ENCODE measurements at regions of chr12 and their contacts with region 1.

Region 1: DNA sequence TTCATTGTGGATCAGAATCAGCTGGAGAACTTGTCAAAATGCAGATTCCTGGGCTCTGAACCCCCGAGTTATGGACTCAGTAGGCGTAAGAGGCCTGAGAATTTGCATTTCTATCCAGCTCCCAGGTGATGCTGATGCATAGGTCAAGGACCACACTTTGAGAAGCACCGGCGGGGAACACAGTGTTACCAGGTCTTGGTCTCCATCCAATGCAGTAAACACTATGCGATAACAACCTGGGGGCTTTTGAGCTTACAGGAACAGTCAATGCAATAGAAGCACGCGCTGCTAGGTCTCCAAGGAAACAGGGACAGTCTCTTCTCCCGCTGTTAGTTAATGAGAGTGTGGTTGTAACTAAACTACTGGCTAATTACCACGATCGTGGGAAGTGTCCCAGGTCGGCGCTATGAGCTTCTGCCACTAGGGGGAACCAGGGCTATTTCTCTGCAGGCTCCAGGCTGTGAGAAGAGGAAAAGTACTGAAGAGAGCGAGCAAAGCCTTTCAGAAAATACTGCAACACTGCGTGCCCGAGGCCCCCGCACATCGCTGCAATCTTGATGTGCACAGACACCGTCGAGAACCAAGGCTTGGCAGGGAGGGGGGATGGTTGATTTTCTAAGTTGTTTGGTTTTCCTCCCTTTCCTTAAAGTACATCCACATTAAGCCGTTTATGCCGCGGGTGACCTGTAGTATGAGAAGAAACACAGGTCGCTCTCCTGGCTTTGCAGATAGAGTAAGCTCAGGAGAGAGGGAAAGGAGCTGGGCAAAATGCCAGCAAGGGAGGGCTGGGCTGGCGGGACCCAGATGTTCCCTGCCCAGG is 52.0 kb upstream of the KCNA1 start:
- DNase-seq: peak; percentile 81
- ATAC-seq: peak; percentile 89
- H3K4me3 ChIP-seq: peak overlapping the region in 4 of 5 experiments; percentile 17 to 34 (median 24)
- H3K4me3 Mint-ChIP-seq: peak overlapping the region; percentile 82
- H3K27ac ChIP-seq: no peak overlapping the region
- H3K27ac Mint-ChIP-seq: no peak overlapping the region
- H3K4me1 ChIP-seq: peaks cover 19 to 22% of the 10 kb centered on the region in 2 donors
- H3K4me1 Mint-ChIP-seq: peaks cover 17% of the 10 kb centered on the region
- H3K27me3 ChIP-seq: peaks cover 0 to 33% (median 10%) of the 10 kb centered on the region in 4 experiments
- H3K27me3 Mint-ChIP-seq: peaks cover 43% of the 10 kb centered on the region
- CTCF ChIP-seq: peak; percentile 93

Region 2: DNA sequence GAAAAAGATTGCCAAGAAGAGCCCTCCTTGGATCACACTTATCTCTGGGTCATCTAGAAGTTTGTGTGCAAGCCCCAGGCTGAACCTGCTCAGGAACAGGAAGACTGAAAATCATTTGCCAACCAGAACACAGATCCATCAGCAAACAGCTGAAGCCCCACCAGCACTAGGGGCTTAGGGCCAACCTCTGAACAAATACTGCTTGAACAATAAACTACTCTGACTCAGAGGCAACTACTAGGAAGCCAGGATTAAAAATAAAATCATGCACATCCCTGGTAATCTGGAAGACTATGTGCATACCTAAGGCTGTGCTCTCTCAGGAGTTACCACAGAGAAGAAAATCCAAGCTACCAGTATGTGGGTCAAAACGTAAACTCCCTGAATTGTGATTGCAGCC is 121.6 kb before region 1 on chr12:
- CTCF ChIA-PET with region 1: no interaction called
- POLR2A ChIA-PET with region 1: no interaction called
- intact Hi-C with region 1: no loop called
- DNase-seq: no peak
- ATAC-seq: no peak
- H3K4me3 ChIP-seq: no peak overlapping the region
- H3K4me3 Mint-ChIP-seq: no peak overlapping the region
- H3K27ac ChIP-seq: no peak overlapping the region
- H3K27ac Mint-ChIP-seq: no peak overlapping the region
- H3K4me1 ChIP-seq: no peaks in the 10 kb centered on the region
- H3K4me1 Mint-ChIP-seq: peaks cover 3% of the 10 kb centered on the region
- H3K27me3 ChIP-seq: peaks cover 0 to 22% (median 16%) of the 10 kb centered on the region in 4 experiments
- H3K27me3 Mint-ChIP-seq: peaks cover 57% of the 10 kb centered on the region
- CTCF ChIP-seq: no peak

Region 3: DNA sequence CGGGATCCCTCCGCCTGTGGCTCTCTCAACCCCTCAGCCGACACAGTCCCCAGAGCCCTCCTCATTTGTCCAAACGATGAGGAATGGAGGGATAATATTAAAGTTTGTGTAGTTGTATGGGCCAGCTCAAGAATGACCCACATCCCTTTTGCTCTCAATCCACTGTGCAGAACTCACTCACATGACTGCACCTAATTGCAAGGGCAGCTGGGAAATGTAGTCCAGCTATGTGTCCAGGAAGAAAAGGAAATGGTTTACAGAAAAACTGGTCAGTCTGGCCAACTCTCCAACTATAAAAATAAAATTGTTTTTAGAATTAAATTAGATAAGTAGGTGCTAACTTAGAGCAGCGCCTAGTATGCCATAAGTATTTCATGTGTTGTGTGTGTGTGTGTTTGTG is 70.9 kb before region 1 on chr12:
- CTCF ChIA-PET with region 1: no interaction called
- POLR2A ChIA-PET with region 1: no interaction called
- intact Hi-C with region 1: no loop called
- DNase-seq: no peak
- ATAC-seq: no peak
- H3K4me3 ChIP-seq: no peak overlapping the region
- H3K4me3 Mint-ChIP-seq: no peak overlapping the region
- H3K27ac ChIP-seq: no peak overlapping the region
- H3K27ac Mint-ChIP-seq: no peak overlapping the region
- H3K4me1 ChIP-seq: no peaks in the 10 kb centered on the region
- H3K4me1 Mint-ChIP-seq: no peaks in the 10 kb centered on the region
- H3K27me3 ChIP-seq: peaks cover 0 to 2% (median 0%) of the 10 kb centered on the region in 4 experiments
- H3K27me3 Mint-ChIP-seq: peaks cover 41% of the 10 kb centered on the region
- CTCF ChIP-seq: no peak

Region 4: DNA sequence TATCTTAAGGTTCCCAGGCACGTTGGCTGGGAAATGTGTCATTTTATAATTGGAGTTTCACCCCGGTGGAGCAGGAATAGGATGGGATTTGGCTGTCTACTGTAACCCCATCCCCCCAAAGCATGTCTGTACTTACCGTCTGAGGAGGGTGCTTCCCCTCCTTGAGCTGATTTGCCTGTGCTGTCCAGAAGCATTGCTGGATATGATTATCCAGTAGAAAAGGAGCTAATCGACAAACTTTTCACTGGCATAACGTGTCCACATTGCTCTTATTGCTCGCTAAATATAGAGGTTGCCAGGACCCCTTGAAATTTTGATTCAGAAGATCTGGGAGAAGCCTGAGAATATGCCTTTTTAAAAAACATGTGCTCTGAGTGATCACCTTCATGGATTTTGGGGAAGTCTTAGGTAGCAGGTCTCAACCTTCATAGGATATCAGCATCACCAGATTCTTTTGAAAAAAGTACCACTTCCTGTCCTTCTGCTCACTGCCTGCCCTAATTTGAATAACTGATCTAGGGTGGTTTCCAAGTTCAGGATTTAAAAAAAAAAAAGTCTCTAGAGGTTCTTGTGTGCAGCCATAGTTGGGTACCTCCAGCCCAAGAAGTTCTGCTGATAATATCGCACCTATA is 28.4 kb before region 1 on chr12:
- CTCF ChIA-PET with region 1: interaction called, 30 read pairs
- POLR2A ChIA-PET with region 1: no interaction called
- intact Hi-C with region 1: loop called (anchors 1 kb)
- DNase-seq: peak; percentile 87
- ATAC-seq: peak; percentile 88
- H3K4me3 ChIP-seq: peak overlapping the region; percentile 17 to 61 (median 38)
- H3K4me3 Mint-ChIP-seq: peak overlapping the region; percentile 82
- H3K27ac ChIP-seq: peak overlapping the region; percentile 76 to 87
- H3K27ac Mint-ChIP-seq: peak overlapping the region; percentile 93
- H3K4me1 ChIP-seq: peaks cover 85% of the 10 kb centered on the region in 2 donors
- H3K4me1 Mint-ChIP-seq: peaks cover 85% of the 10 kb centered on the region
- H3K27me3 ChIP-seq: no peaks in the 10 kb centered on the region
- H3K27me3 Mint-ChIP-seq: no peaks in the 10 kb centered on the region
- CTCF ChIP-seq: no peak

Region 5: GRCh38 chr12:4909734-4910501 is 52.2 kb after region 1 on chr12 and contains the start of gene KCNA1:
- CTCF ChIA-PET with region 1: interaction called, 12 read pairs
- POLR2A ChIA-PET with region 1: no interaction called
- intact Hi-C with region 1: no loop called
- DNase-seq: peak; percentile 42
- ATAC-seq: peak; percentile 19
- H3K4me3 ChIP-seq: peak within 1 kb of the TSS; percentile 34 to 62 (median 58)
- H3K4me3 Mint-ChIP-seq: peak within 1 kb of the TSS; percentile 98
- H3K27ac ChIP-seq: no peak within 1 kb of the TSS
- H3K27ac Mint-ChIP-seq: peak within 1 kb of the TSS; percentile 50
- H3K4me1 ChIP-seq: peaks cover 25 to 28% of the 10 kb centered on the region in 2 donors
- H3K4me1 Mint-ChIP-seq: peaks cover 22% of the 10 kb centered on the region
- H3K27me3 ChIP-seq: peaks cover 3 to 72% (median 49%) of the 10 kb centered on the region in 4 experiments
- H3K27me3 Mint-ChIP-seq: peaks cover 33% of the 10 kb centered on the region
- CTCF ChIP-seq: no peak
- total RNA-seq, gene KCNA1: not detected in 2 replicates

Region 6: GRCh38 chr12:5022465-5023061 is 164.9 kb after region 1 on chr12:
- CTCF ChIA-PET with region 1: interaction called, 11 read pairs
- POLR2A ChIA-PET with region 1: no interaction called
- intact Hi-C with region 1: no loop called
- DNase-seq: peak; percentile 78
- ATAC-seq: peak; percentile 60
- H3K4me3 ChIP-seq: no peak overlapping the region
- H3K4me3 Mint-ChIP-seq: no peak overlapping the region
- H3K27ac ChIP-seq: no peak overlapping the region
- H3K27ac Mint-ChIP-seq: no peak overlapping the region
- H3K4me1 ChIP-seq: no peaks in the 10 kb centered on the region
- H3K4me1 Mint-ChIP-seq: no peaks in the 10 kb centered on the region
- H3K27me3 ChIP-seq: peaks cover 0 to 5% (median 1%) of the 10 kb centered on the region in 4 experiments
- H3K27me3 Mint-ChIP-seq: peaks cover 49% of the 10 kb centered on the region
- CTCF ChIP-seq: peak; percentile 97

Measured in B cell (primary cell).